MCF 10A (cell line): ENCODE measurements at regions of chr3 and their contacts with region 1.

Region 1: DNA sequence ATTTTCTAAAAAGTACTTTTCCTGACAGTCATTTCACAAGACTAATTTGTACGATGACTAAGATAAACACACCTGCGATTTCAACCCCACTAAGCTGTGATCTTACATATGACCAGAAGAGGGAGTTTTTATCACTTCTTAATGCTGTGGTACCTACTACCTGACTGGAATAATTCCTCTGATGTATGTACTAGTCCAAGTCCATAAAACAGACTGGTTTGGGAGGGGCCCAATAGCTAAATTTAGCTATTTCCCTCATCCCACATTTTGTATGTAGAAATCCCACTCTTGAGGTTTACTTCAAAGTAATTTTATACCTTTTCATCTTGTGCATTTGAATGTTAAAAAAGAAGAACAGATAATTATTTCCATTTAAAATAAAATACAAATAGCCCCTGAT is 49.7 kb upstream of the SCAANT1 start:
- DNase-seq: peak; percentile 76
- H3K4me3 Mint-ChIP-seq: no peak overlapping the region
- H3K27ac Mint-ChIP-seq: no peak overlapping the region
- H3K4me1 Mint-ChIP-seq: peaks cover 13% of the 10 kb centered on the region
- H3K27me3 Mint-ChIP-seq: no peaks in the 10 kb centered on the region
- CTCF ChIP-seq: peak; percentile 52

Region 2: GRCh38 chr3:63937661-63938651 is 23.9 kb before region 1 on chr3:
- CTCF ChIA-PET with region 1: interaction called, 15 read pairs
- POLR2A ChIA-PET with region 1: interaction called, 14 read pairs
- intact Hi-C with region 1: no loop called
- DNase-seq: peak; percentile 66
- H3K4me3 Mint-ChIP-seq: no peak overlapping the region
- H3K27ac Mint-ChIP-seq: peak overlapping the region; percentile 57
- H3K4me1 Mint-ChIP-seq: peaks cover 44% of the 10 kb centered on the region
- H3K27me3 Mint-ChIP-seq: no peaks in the 10 kb centered on the region
- CTCF ChIP-seq: no peak

Region 3: DNA sequence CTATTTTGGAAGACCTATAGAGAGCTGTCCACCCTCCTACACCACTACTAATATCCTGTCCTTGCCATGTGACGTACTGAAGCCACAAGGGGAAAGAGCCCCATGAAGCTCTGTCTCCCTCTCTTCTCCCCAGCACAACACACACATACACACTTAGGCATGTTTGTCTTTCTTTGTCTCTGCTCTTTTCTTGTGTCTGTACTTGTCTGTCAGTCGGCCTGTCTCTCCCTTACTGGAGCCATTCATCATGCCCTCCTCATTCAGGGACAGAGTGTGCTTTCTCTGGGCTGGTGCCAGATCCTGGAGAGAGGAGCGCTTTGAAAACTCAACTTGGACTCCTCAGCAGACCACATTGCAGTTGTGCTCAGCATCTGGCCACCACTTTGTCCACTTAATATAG is 13.8 kb after region 1 on chr3:
- CTCF ChIA-PET with region 1: interaction called, 185 read pairs
- POLR2A ChIA-PET with region 1: interaction called, 283 read pairs
- intact Hi-C with region 1: no loop called
- DNase-seq: peak; percentile 94
- H3K4me3 Mint-ChIP-seq: peak overlapping the region; percentile 45
- H3K27ac Mint-ChIP-seq: peak overlapping the region; percentile 86
- H3K4me1 Mint-ChIP-seq: peaks cover 63% of the 10 kb centered on the region
- H3K27me3 Mint-ChIP-seq: no peaks in the 10 kb centered on the region
- CTCF ChIP-seq: no peak

Region 4: DNA sequence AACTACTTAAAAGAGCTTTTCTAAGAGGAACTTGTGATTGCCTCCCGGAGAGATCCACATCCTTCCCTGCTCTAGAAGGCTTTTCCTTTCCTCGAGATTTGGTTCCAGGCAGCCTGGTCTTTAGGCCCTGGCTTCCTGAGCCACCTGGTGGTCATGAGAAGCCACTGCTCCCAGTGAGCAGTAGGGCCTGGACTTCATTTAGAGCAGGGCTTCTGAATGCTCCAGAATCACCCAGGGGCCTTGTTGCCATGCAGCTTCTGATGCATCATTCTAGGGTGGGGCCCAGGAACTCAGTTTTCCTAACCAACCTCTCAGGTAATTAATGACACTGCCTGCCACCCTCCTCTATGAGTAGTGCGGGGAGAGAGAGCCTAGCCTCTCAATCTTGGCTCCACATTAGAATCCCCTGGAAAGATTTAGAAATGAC is 31.8 kb after region 1 on chr3:
- CTCF ChIA-PET with region 1: interaction called, 359 read pairs
- POLR2A ChIA-PET with region 1: interaction called, 15 read pairs
- intact Hi-C with region 1: loop called (anchors 1 kb)
- DNase-seq: peak; percentile 77
- H3K4me3 Mint-ChIP-seq: no peak overlapping the region
- H3K27ac Mint-ChIP-seq: peak overlapping the region; percentile 23
- H3K4me1 Mint-ChIP-seq: no peaks in the 10 kb centered on the region
- H3K27me3 Mint-ChIP-seq: no peaks in the 10 kb centered on the region
- CTCF ChIP-seq: peak; percentile 83

Region 5: DNA sequence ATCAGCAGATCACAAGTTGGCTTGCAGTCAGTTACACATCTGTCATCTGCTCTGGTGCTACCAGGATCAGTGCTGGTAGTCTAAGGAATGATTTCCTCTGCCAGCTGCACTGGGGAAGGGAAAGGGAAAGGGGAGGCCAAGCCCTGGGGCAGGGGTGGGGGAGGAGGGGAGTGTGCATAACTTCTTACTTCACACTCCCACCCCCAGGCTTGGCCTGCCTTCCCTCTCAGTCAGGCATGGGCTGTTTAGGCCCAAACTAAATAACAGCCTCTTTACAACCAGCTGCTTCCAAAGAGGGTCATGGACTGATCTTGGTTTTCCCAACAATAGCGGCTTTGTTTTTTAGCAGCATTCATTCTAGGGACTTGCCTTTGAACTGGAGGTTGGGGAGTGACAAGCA is 147.5 kb after region 1 on chr3:
- CTCF ChIA-PET with region 1: no interaction called
- POLR2A ChIA-PET with region 1: no interaction called
- intact Hi-C with region 1: no loop called
- DNase-seq: peak; percentile 19
- H3K4me3 Mint-ChIP-seq: no peak overlapping the region
- H3K27ac Mint-ChIP-seq: no peak overlapping the region
- H3K4me1 Mint-ChIP-seq: peaks cover 7% of the 10 kb centered on the region
- H3K27me3 Mint-ChIP-seq: no peaks in the 10 kb centered on the region
- CTCF ChIP-seq: no peak

Region 6: DNA sequence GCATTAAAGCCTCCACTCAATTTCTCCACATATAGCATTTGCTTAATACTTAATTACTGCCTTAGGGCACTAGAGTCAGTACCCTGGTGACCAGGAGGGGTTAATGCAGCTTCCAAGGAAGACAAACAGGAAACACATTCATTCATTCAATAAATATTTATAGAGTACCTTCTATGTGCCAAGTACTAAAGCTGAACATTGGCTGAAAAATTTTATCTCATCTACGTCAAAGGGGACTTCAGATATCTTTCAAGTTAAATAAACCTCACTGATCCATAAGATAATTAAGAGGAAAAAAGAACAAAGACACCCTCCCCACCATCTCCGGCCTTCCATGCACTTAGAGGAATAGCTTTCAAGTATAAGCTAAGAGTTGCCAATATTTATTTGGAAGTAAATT is 420.3 kb after region 1 on chr3:
- CTCF ChIA-PET with region 1: no interaction called
- POLR2A ChIA-PET with region 1: no interaction called
- intact Hi-C with region 1: no loop called
- DNase-seq: no peak
- H3K4me3 Mint-ChIP-seq: no peak overlapping the region
- H3K27ac Mint-ChIP-seq: no peak overlapping the region
- H3K4me1 Mint-ChIP-seq: no peaks in the 10 kb centered on the region
- H3K27me3 Mint-ChIP-seq: no peaks in the 10 kb centered on the region
- CTCF ChIP-seq: no peak